Endothelial cell of umbilical vein (primary cell): ENCODE measurements at regions of chr15 and their contacts with region 1.

Region 1: GRCh38 chr15:58770857-58771620 is at the start of gene MINDY2:
- DNase-seq: peak; percentile 99
- H3K4me3 ChIP-seq: peak within 1 kb of the TSS; percentile 62 to 82 (median 65)
- H3K27ac ChIP-seq: peak within 1 kb of the TSS; percentile 81
- H3K4me1 ChIP-seq: peaks cover 23% of the 10 kb centered on the region
- H3K27me3 ChIP-seq: no peaks in the 10 kb centered on the region
- CTCF ChIP-seq: peak; percentile 12 to 44
- POLR2A ChIP-seq: peak; percentile 71
- total RNA-seq, gene MINDY2: 11.4 and 13.7 TPM in 2 replicates

Region 2: GRCh38 chr15:58396181-58396580 is 374.9 kb before region 1 on chr15:
- CTCF ChIA-PET with region 1: no interaction called
- POLR2A ChIA-PET with region 1: no interaction called
- dilution Hi-C with region 1: no loop called
- intact Hi-C with region 1: no loop called
- DNase-seq: no peak
- H3K4me3 ChIP-seq: no peak overlapping the region
- H3K27ac ChIP-seq: no peak overlapping the region
- H3K4me1 ChIP-seq: no peaks in the 10 kb centered on the region
- H3K27me3 ChIP-seq: peaks cover 0 to 22% of the 10 kb centered on the region in 2 experiments
- CTCF ChIP-seq: no peak
- POLR2A ChIP-seq: no peak

Region 3: GRCh38 chr15:58440158-58440910 is 330.7 kb before region 1 on chr15:
- CTCF ChIA-PET with region 1: interaction called, 4 read pairs
- POLR2A ChIA-PET with region 1: no interaction called
- dilution Hi-C with region 1: no loop called
- intact Hi-C with region 1: loop called (anchors 2 kb)
- DNase-seq: peak; percentile 90
- H3K4me3 ChIP-seq: no peak overlapping the region
- H3K27ac ChIP-seq: peak overlapping the region; percentile 82
- H3K4me1 ChIP-seq: peaks cover 32% of the 10 kb centered on the region
- H3K27me3 ChIP-seq: no peaks in the 10 kb centered on the region
- CTCF ChIP-seq: no peak
- POLR2A ChIP-seq: peak; percentile 34

Region 4: GRCh38 chr15:58758138-58758537 is 12.9 kb before region 1 on chr15:
- CTCF ChIA-PET with region 1: interaction called, 24 read pairs
- POLR2A ChIA-PET with region 1: interaction called, 4 read pairs
- dilution Hi-C with region 1: no loop called
- intact Hi-C with region 1: no loop called
- DNase-seq: no peak
- H3K4me3 ChIP-seq: no peak overlapping the region
- H3K27ac ChIP-seq: no peak overlapping the region
- H3K4me1 ChIP-seq: no peaks in the 10 kb centered on the region
- H3K27me3 ChIP-seq: no peaks in the 10 kb centered on the region
- CTCF ChIP-seq: no peak
- POLR2A ChIP-seq: no peak

Region 5: DNA sequence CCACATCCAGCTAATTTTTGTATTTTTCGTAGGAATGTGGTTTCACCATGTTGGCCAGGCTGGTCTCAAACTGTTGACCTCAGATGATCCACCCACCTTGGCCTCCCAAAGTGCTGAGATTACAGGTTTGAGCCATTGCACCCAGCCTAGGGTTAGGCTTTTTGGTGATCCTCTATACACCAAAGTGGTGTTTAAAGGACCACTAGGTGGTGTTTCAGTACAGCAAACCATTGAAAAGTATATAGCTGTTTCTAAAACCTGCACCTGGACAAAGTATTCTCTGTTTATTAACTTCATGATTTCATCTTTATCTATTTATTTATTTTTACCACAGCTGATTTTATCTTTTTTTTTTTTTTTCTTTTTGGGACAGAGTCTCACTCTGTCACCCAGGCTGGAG is 68.4 kb after region 1 on chr15:
- CTCF ChIA-PET with region 1: no interaction called
- POLR2A ChIA-PET with region 1: no interaction called
- dilution Hi-C with region 1: no loop called
- intact Hi-C with region 1: no loop called
- DNase-seq: no peak
- H3K4me3 ChIP-seq: no peak overlapping the region
- H3K27ac ChIP-seq: no peak overlapping the region
- H3K4me1 ChIP-seq: peaks cover 8% of the 10 kb centered on the region
- H3K27me3 ChIP-seq: no peaks in the 10 kb centered on the region
- CTCF ChIP-seq: no peak
- POLR2A ChIP-seq: no peak

Region 6: GRCh38 chr15:58933281-58934113 is 162.5 kb after region 1 on chr15 and contains the start of gene SLTM:
- CTCF ChIA-PET with region 1: no interaction called
- POLR2A ChIA-PET with region 1: no interaction called
- dilution Hi-C with region 1: no loop called
- intact Hi-C with region 1: loop called (anchors 1 kb)
- DNase-seq: peak; percentile 97
- H3K4me3 ChIP-seq: peak within 1 kb of the TSS; percentile 54 to 97 (median 95)
- H3K27ac ChIP-seq: peak within 1 kb of the TSS; percentile 93
- H3K4me1 ChIP-seq: peaks cover 19% of the 10 kb centered on the region
- H3K27me3 ChIP-seq: no peaks in the 10 kb centered on the region
- CTCF ChIP-seq: peak in 1 of 2 donors; percentile 31
- POLR2A ChIP-seq: peak; percentile 99
- total RNA-seq, gene SLTM: 80.9 and 93.0 TPM in 2 replicates